Naive thymus-derived CD4-positive, alpha-beta T cell (primary cell): ENCODE measurements at regions of chr20 and their contacts with region 1.

Region 1: DNA sequence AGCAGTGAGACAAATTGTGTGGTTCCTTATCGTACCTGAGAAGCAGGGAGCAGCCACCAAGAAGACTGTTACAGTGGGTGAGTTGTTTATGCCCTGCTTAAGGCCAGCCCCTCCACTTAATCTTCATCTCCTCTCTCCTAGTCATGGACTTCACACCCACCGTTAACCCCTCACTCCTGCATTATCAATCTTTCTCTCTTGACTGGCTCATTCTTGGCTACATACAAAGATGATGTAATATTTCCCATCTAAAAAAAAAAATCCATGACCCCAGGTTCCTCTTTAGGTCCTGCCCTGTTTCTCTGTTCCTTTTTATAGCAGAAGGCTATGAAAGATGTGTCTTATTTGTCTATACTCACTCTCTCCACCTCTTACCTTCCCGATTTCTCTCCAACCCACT is 72.4 kb downstream of the SHLD1 start:
- DNase-seq: no peak
- ATAC-seq: peak; percentile 47
- H3K4me3 ChIP-seq: no peak overlapping the region
- H3K4me3 Mint-ChIP-seq: no peak overlapping the region
- H3K27ac ChIP-seq: no peak overlapping the region
- H3K27ac Mint-ChIP-seq: no peak overlapping the region
- H3K4me1 ChIP-seq: no peaks in the 10 kb centered on the region
- H3K4me1 Mint-ChIP-seq: peaks cover 0 to 29% (median 15%) of the 10 kb centered on the region in 7 donors
- H3K27me3 ChIP-seq: no peaks in the 10 kb centered on the region
- H3K27me3 Mint-ChIP-seq: no peaks in the 10 kb centered on the region

Region 2: DNA sequence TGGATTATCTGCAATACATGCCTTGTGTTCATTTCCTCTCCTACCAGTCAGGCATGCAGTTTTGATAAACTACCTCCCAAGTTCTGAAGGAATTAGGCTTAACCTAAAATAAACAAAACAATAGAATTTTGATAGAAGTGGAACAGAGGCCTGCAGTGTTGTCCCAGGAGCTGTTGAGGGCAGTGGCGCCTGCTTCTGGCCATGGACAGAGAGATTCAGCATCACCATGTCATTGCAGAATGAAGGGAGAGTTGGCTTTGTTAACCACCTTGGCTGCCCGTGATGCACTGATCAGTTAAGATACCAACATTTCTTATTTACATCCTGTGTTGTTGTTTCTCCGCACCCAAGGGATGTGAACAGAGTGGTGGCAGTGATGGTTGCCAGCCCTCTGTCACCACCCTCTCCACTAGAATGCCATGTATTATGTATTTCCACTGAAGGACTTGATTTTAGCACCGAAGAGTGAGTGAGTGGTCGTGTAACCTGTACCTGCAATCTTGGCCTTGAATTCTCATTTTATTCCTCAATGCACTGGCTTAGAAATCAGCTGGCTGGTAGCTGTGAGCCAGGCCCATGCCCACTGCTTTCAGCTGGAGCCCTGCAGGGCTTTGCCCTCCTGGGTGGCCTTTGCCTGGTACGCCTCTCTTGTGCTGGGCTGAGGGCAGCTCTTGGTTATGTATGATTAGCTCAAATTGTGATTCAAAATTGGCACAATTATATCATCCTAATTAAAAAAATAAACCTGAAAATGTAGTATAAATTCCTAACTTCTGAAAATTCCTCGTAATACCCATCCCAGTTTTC is 15.9 kb before region 1 on chr20:
- CTCF ChIA-PET with region 1: no interaction called
- POLR2A ChIA-PET with region 1: interaction called, 5 read pairs
- intact Hi-C with region 1: loop called in 1 of 2 experiments (anchors 1 kb)
- DNase-seq: no peak
- ATAC-seq: no peak
- H3K4me3 ChIP-seq: no peak overlapping the region
- H3K4me3 Mint-ChIP-seq: peak overlapping the region in 1 of 10 donors; percentile 32
- H3K27ac ChIP-seq: no peak overlapping the region
- H3K27ac Mint-ChIP-seq: peak overlapping the region in 4 of 9 donors; percentile 0 to 67 (median 46)
- H3K4me1 ChIP-seq: peaks cover 4 to 19% of the 10 kb centered on the region in 2 donors
- H3K4me1 Mint-ChIP-seq: peaks cover 12 to 49% (median 25%) of the 10 kb centered on the region in 7 donors
- H3K27me3 ChIP-seq: no peaks in the 10 kb centered on the region
- H3K27me3 Mint-ChIP-seq: no peaks in the 10 kb centered on the region